MCF 10A (cell line): ENCODE measurements at regions of chr1 and their contacts with region 1.

Region 1: DNA sequence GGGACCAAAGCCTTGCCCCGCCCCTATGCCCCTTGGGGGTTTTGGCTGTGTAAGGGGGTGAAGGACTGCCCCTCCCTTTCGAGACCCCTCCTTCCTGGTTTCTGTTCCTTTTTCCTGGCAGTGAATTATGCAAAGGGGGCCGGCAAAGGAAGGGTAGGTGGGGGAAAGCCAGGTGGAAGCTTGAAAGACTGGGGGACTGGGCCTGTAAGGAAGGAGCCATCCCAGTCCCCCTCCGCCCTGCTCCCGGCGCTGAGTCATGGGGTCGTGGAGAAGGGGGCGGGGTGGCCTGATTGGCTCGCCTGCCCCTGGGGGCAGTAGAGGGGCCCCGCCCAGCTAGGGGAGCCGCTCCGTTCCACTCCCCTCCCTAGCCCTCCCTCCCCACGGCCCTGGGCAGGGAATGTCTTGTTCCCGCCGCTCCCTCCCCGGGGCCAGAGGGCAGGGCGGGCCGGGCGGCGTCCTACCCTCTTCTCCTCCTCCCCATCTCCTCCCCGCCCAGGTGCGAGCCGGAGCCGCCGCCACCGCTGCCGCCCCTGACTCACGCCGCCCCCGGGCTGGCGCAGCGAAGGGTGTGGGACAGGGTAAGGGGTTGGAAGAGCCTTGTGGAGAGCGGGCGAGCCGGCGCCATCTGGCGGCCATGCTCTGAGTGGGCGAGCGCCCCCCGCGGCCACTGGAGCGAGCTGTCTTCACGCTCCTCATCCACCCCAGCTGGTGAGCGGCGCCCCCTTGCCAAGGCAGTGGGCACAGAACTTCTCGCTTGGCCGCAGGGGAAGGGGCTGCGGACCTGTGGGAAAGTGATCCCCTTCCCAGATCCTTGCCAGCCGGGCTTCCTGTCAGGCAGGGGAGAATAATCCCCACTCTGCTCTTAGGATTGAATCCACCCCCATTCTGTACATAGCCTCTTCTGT is 14.7 kb downstream of the ZBTB7B start:
- DNase-seq: peak; percentile 99
- H3K4me3 Mint-ChIP-seq: peak overlapping the region; percentile 62
- H3K27ac Mint-ChIP-seq: peak overlapping the region; percentile 80
- H3K4me1 Mint-ChIP-seq: peaks cover 78% of the 10 kb centered on the region
- H3K27me3 Mint-ChIP-seq: no peaks in the 10 kb centered on the region
- CTCF ChIP-seq: peak; percentile 100

Region 2: DNA sequence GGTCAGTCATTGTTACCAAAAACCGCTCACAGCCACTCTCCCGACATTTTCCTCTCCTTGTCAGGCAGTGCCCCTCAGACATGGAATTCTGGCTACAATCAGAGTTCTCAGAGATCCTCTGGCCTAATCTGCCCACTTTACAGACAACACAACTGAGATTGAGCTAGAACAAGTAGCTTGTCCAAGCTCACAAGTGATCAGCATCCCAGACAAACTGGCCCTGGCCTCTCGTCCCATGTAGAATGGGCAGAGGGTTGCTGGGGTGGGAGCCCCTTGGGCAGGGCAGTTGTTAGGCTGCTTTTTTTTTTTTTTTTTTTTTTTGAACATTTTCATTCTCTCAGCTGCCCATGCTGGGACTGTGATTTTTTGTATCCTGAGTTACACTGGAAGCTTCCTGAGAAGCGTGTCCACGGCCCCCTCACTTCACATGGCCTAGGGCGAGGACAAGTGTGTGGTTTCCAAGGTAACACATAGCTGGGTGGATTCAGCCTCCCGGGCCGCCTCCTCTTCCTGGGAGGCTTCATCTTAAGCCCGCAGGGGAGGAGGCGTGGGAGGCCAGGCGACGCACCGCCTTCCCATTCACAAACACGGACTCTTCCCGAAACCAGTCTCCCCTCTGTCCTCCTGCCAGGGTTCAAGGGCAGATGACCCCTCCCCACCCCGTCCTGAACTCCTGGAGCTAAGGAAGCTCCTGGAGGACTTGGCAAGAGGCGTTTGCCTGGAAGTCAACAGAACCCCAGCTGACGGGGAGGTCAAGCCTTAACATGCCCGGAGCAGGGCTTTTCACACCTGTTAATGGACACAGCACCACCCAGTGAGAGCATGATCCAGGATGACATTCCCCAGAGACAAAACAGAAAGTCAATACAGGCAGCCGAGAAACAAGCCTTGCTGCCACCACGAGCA is 204.1 kb before region 1 on chr1:
- CTCF ChIA-PET with region 1: no interaction called
- POLR2A ChIA-PET with region 1: no interaction called
- intact Hi-C with region 1: no loop called
- DNase-seq: peak; percentile 94
- H3K4me3 Mint-ChIP-seq: peak overlapping the region; percentile 2
- H3K27ac Mint-ChIP-seq: peak overlapping the region; percentile 86
- H3K4me1 Mint-ChIP-seq: peaks cover 25% of the 10 kb centered on the region
- H3K27me3 Mint-ChIP-seq: peaks cover 5% of the 10 kb centered on the region
- CTCF ChIP-seq: no peak

Region 3: DNA sequence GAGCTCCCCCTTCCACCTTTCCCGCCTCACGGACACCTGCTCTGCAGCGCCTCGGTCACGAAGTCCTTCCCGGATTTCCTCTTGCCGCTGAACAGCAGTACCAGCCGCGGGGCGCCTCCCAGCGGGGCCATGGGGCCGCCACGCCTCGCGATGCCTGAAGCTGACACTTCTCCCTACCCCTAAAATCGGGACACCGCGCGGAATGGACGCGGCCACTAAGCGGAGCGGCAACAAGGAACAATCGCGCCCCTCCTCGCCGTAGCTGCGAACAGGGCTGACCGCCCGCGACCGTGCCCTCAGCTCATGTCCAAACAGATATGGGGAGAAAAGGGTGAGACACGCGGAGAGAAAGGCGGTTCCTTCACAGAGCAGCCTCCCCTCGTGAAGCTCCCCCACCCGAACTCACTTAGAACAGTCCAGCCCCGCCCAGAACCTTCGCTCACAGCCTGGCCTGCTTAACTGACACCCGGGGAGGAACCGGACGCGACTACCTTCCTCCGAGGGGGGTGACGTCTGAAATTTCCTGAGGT is 80.7 kb before region 1 on chr1 and contains the start of gene PMVK:
- CTCF ChIA-PET with region 1: interaction called, 4 read pairs
- POLR2A ChIA-PET with region 1: interaction called, 21 read pairs
- intact Hi-C with region 1: no loop called
- DNase-seq: peak; percentile 99
- H3K4me3 Mint-ChIP-seq: peak within 1 kb of the TSS; percentile 90
- H3K27ac Mint-ChIP-seq: peak within 1 kb of the TSS; percentile 100
- H3K4me1 Mint-ChIP-seq: peaks cover 49% of the 10 kb centered on the region
- H3K27me3 Mint-ChIP-seq: no peaks in the 10 kb centered on the region
- CTCF ChIP-seq: peak; percentile 26
- total RNA-seq, gene PMVK: 57.7 and 68.9 TPM in 2 replicates

Region 4: GRCh38 chr1:154955718-154956543 is 61.4 kb before region 1 on chr1 and contains the start of gene PBXIP1:
- CTCF ChIA-PET with region 1: interaction called, 7 read pairs
- POLR2A ChIA-PET with region 1: interaction called, 45 read pairs
- intact Hi-C with region 1: no loop called
- DNase-seq: peak; percentile 97
- H3K4me3 Mint-ChIP-seq: peak within 1 kb of the TSS; percentile 88
- H3K27ac Mint-ChIP-seq: peak within 1 kb of the TSS; percentile 68
- H3K4me1 Mint-ChIP-seq: peaks cover 43% of the 10 kb centered on the region
- H3K27me3 Mint-ChIP-seq: no peaks in the 10 kb centered on the region
- CTCF ChIP-seq: peak; percentile 24
- total RNA-seq, gene PBXIP1: 11.3 TPM in 2 replicates

Region 5: DNA sequence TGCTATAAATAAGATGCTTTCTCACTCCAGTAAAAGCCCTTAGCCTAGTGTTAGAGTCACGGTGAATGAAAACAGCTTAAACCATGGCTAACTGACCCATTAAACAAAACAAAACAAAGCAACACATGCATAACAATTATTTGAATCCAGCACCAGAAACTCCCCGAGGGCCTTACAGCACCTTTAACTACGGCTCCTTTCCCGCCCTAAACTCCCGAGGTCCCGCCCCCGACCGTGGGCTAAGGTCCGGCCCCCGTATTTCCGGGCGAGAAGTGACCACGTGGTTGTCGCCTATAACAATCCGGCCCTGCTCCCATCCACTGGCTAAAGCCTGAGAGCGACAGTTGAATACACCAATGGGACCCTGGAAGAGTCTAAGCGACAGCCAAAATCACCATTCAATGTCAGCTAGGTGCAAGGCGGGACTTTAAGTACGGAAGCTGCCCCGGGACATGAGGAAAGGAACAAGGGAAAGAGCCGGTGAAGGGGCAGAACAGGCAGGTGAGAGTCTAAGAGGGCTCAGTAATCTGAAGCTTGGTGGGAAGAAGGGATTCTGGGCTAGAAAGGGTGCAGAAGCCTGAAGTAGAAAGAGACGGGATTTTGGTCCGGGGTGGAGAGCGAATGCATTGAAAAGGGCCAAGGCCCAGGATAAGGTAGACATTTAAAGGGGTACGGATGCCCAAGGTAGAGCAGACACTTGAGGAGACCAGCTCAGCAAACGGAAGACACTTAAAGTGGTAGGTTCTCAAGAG is 34.2 kb before region 1 on chr1 and contains the start of gene FLAD1:
- CTCF ChIA-PET with region 1: interaction called, 10 read pairs
- POLR2A ChIA-PET with region 1: interaction called, 312 read pairs
- intact Hi-C with region 1: loop called (anchors 1 kb)
- DNase-seq: peak; percentile 100
- H3K4me3 Mint-ChIP-seq: no peak within 1 kb of the TSS
- H3K27ac Mint-ChIP-seq: no peak within 1 kb of the TSS
- H3K4me1 Mint-ChIP-seq: peaks cover 6% of the 10 kb centered on the region
- H3K27me3 Mint-ChIP-seq: no peaks in the 10 kb centered on the region
- CTCF ChIP-seq: no peak
- total RNA-seq, gene FLAD1: 65.4 and 91.1 TPM in 2 replicates

Region 6: GRCh38 chr1:155001675-155002463 is 15.4 kb before region 1 on chr1:
- CTCF ChIA-PET with region 1: interaction called, 24 read pairs
- POLR2A ChIA-PET with region 1: interaction called, 283 read pairs
- intact Hi-C with region 1: loop called (anchors 1 kb)
- DNase-seq: peak; percentile 100
- H3K4me3 Mint-ChIP-seq: peak overlapping the region; percentile 90
- H3K27ac Mint-ChIP-seq: peak overlapping the region; percentile 97
- H3K4me1 Mint-ChIP-seq: peaks cover 52% of the 10 kb centered on the region
- H3K27me3 Mint-ChIP-seq: no peaks in the 10 kb centered on the region
- CTCF ChIP-seq: peak; percentile 34